ENCODE measurements at regions of chr5 and their contacts with region 1.

Region 1: GRCh38 chr5:149561848-149562247 is 10.6 kb upstream of the CSNK1A1 start:
- DNase-seq: no peak
- H3K4me3 Mint-ChIP-seq: no peak overlapping the region
- H3K27ac Mint-ChIP-seq: no peak overlapping the region
- H3K4me1 Mint-ChIP-seq: peaks cover 19% of the 10 kb centered on the region
- H3K27me3 Mint-ChIP-seq: no peaks in the 10 kb centered on the region

Region 2: GRCh38 chr5:149317281-149318048 is 244.4 kb before region 1 on chr5:
- intact Hi-C with region 1: loop called (anchors 5 kb)
- DNase-seq: no peak
- H3K4me3 Mint-ChIP-seq: no peak overlapping the region
- H3K27ac Mint-ChIP-seq: no peak overlapping the region
- H3K4me1 Mint-ChIP-seq: no peaks in the 10 kb centered on the region
- H3K27me3 Mint-ChIP-seq: no peaks in the 10 kb centered on the region

Region 3: GRCh38 chr5:149381987-149382340 is 179.9 kb before region 1 on chr5:
- intact Hi-C with region 1: loop called (anchors 1 kb)
- DNase-seq: peak; percentile 59
- H3K4me3 Mint-ChIP-seq: no peak overlapping the region
- H3K27ac Mint-ChIP-seq: no peak overlapping the region
- H3K4me1 Mint-ChIP-seq: no peaks in the 10 kb centered on the region
- H3K27me3 Mint-ChIP-seq: no peaks in the 10 kb centered on the region

Region 4: GRCh38 chr5:149434162-149435014 is 127.5 kb before region 1 on chr5:
- intact Hi-C with region 1: no loop called
- DNase-seq: peak; percentile 21
- H3K4me3 Mint-ChIP-seq: no peak overlapping the region
- H3K27ac Mint-ChIP-seq: no peak overlapping the region
- H3K4me1 Mint-ChIP-seq: peaks cover 23% of the 10 kb centered on the region
- H3K27me3 Mint-ChIP-seq: no peaks in the 10 kb centered on the region

Region 5: DNA sequence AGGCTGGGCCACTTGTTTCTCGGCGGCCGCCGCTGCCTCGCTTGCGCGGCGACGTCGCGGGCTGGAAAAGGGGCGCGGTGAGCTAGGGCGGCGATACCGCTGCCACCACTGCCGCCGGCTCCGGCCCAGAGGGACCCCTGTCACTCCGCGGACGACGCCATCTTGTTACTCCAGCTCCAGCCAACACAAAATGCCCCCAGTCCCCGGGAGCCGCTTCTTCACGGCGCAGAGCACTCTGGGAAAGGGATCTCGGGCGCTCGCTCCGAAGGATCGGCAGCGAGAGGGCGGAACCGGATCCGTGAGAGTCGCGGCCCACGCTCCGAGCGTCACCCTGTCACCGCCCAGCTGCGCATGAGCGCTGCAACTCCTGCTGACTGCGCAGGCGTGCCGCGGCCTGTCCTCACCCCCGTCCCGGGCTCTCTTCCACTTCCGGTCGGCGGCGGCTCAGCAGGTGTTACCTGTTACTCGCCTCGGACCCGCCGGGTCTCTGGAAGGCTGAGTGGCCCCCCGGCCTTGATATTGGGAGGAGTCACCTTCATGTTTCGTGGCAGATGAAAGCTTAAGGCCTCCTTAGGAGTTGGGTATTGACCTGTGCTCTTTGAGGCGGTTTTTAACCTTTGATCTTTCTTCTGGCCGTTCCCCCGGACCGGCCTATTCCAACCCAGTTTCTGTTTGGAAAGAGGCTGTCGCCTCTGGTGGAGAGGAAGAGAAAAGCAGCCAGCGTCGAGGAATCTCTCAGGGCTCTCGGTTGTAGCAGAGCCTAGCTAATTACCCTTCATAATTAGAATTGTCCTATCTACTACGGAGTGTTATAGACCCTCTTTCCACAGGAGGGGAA is 10.4 kb before region 1 on chr5 and contains the start of gene CSNK1A1:
- intact Hi-C with region 1: loop called (anchors 1 kb)
- DNase-seq: peak; percentile 99
- H3K4me3 Mint-ChIP-seq: peak within 1 kb of the TSS; percentile 96
- H3K27ac Mint-ChIP-seq: peak within 1 kb of the TSS; percentile 100
- H3K4me1 Mint-ChIP-seq: peaks cover 20% of the 10 kb centered on the region
- H3K27me3 Mint-ChIP-seq: no peaks in the 10 kb centered on the region
- total RNA-seq, gene CSNK1A1: 176 and 194 TPM in 2 replicates

Region 6: GRCh38 chr5:149618581-149619251 is 56.9 kb after region 1 on chr5:
- intact Hi-C with region 1: loop called (anchors 5 kb)
- DNase-seq: no peak
- H3K4me3 Mint-ChIP-seq: no peak overlapping the region
- H3K27ac Mint-ChIP-seq: no peak overlapping the region
- H3K4me1 Mint-ChIP-seq: peaks cover 17% of the 10 kb centered on the region
- H3K27me3 Mint-ChIP-seq: peaks cover 2% of the 10 kb centered on the region

Region 7: GRCh38 chr5:149680810-149681221 is 119.0 kb after region 1 on chr5:
- intact Hi-C with region 1: no loop called
- DNase-seq: no peak
- H3K4me3 Mint-ChIP-seq: no peak overlapping the region
- H3K27ac Mint-ChIP-seq: no peak overlapping the region
- H3K4me1 Mint-ChIP-seq: no peaks in the 10 kb centered on the region
- H3K27me3 Mint-ChIP-seq: peaks cover 15% of the 10 kb centered on the region

Region 8: GRCh38 chr5:149799119-149799623 is 237.3 kb after region 1 on chr5:
- intact Hi-C with region 1: no loop called
- DNase-seq: no peak
- H3K4me3 Mint-ChIP-seq: no peak overlapping the region
- H3K27ac Mint-ChIP-seq: no peak overlapping the region
- H3K4me1 Mint-ChIP-seq: no peaks in the 10 kb centered on the region
- H3K27me3 Mint-ChIP-seq: no peaks in the 10 kb centered on the region

Measured in activated T-helper 2 cell treated with anti-CD3 and anti-CD28 coated beads, Interferon-gamma antibody, Interleukin-2, Interleukin-4, amounts not matched to agents 10 μg/mL and 5 μg/mL and 100 μg/mL, durations not matched to agents 14 hours and 24 hours and 36 hours (primary cell).